ENCODE measurements at regions of chr16 and their contacts with region 1.

Region 1: DNA sequence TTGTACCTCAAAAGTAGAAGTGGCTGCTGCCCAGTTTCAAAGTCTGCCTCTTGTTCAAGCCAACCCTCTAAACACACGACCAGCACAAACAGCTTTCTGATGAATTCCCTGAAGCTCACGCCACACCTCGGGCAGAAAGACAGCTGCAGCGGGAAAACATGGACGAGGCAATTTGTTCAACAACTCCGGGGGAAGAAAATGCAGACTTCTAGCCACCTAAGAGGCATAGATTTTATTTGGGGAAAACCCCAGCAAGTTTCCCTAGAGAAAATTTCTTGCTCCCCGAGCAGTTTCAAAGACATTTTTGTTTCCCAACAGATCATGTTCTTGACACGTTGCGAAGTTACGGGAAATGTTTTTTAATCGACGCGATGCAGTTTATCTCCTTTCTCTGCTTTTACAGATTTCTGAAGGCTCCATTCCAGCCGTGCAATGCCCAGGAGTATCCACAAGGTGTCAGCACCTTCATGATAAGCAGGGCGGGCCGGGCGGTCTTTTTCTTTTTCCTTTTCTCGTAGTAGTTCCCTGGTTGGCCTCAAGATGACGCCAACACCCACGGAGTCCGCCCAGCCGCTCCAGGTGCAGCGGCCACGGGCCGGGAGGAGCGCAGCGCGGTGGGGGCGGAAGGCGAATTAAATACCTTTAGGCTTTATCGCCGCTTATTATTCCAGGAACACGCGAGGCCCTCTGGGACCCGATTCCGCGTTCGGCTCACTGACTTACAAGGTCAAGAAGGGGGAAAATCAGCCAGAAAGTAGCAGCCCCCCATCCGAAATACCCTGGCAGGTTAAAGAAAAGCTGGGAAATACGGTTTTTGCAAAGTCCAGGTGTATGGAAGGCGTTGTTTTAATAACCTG is 2.9 kb upstream of the FOXC2 start:
- DNase-seq: peak; percentile 95
- H3K4me3 ChIP-seq: no peak overlapping the region
- H3K27ac ChIP-seq: no peak overlapping the region
- H3K4me1 ChIP-seq: peaks cover 0 to 23% (median 19%) of the 10 kb centered on the region in 4 donors
- H3K27me3 ChIP-seq: peaks cover 42 to 97% (median 61%) of the 10 kb centered on the region in 3 donors
- CTCF ChIP-seq: peak; percentile 100
- EP300 ChIP-seq: no peak
- POLR2A ChIP-seq: no peak

Region 2: GRCh38 chr16:85986931-85987749 is 576.6 kb before region 1 on chr16:
- intact Hi-C with region 1: no loop called
- DNase-seq: peak; percentile 64
- H3K4me3 ChIP-seq: peak overlapping the region in 1 of 4 donors; percentile 1
- H3K27ac ChIP-seq: peak overlapping the region in 1 of 4 donors; percentile 12
- H3K4me1 ChIP-seq: peaks cover 0 to 6% (median 2%) of the 10 kb centered on the region in 4 donors
- H3K27me3 ChIP-seq: peaks cover 0 to 43% (median 7%) of the 10 kb centered on the region in 3 donors
- CTCF ChIP-seq: peak in 2 of 4 experiments; percentile 5 to 70
- EP300 ChIP-seq: no peak
- POLR2A ChIP-seq: no peak

Region 3: GRCh38 chr16:86242244-86243122 is 321.2 kb before region 1 on chr16:
- intact Hi-C with region 1: no loop called
- DNase-seq: peak; percentile 54
- H3K4me3 ChIP-seq: no peak overlapping the region
- H3K27ac ChIP-seq: no peak overlapping the region
- H3K4me1 ChIP-seq: peaks cover 0 to 19% (median 13%) of the 10 kb centered on the region in 4 donors
- H3K27me3 ChIP-seq: no peaks in the 10 kb centered on the region
- CTCF ChIP-seq: no peak
- EP300 ChIP-seq: no peak
- POLR2A ChIP-seq: no peak

Region 4: GRCh38 chr16:86819533-86819892 is 255.8 kb after region 1 on chr16:
- intact Hi-C with region 1: no loop called
- DNase-seq: no peak
- H3K4me3 ChIP-seq: no peak overlapping the region
- H3K27ac ChIP-seq: no peak overlapping the region
- H3K4me1 ChIP-seq: no peaks in the 10 kb centered on the region
- H3K27me3 ChIP-seq: peaks cover 0 to 73% (median 0%) of the 10 kb centered on the region in 3 donors
- CTCF ChIP-seq: no peak
- EP300 ChIP-seq: no peak
- POLR2A ChIP-seq: no peak

Region 5: GRCh38 chr16:87098976-87099720 is 535.4 kb after region 1 on chr16:
- intact Hi-C with region 1: no loop called
- DNase-seq: no peak
- H3K4me3 ChIP-seq: no peak overlapping the region
- H3K27ac ChIP-seq: no peak overlapping the region
- H3K4me1 ChIP-seq: no peaks in the 10 kb centered on the region
- H3K27me3 ChIP-seq: peaks cover 3 to 40% (median 5%) of the 10 kb centered on the region in 3 donors
- CTCF ChIP-seq: no peak
- EP300 ChIP-seq: no peak
- POLR2A ChIP-seq: no peak

Region 6: DNA sequence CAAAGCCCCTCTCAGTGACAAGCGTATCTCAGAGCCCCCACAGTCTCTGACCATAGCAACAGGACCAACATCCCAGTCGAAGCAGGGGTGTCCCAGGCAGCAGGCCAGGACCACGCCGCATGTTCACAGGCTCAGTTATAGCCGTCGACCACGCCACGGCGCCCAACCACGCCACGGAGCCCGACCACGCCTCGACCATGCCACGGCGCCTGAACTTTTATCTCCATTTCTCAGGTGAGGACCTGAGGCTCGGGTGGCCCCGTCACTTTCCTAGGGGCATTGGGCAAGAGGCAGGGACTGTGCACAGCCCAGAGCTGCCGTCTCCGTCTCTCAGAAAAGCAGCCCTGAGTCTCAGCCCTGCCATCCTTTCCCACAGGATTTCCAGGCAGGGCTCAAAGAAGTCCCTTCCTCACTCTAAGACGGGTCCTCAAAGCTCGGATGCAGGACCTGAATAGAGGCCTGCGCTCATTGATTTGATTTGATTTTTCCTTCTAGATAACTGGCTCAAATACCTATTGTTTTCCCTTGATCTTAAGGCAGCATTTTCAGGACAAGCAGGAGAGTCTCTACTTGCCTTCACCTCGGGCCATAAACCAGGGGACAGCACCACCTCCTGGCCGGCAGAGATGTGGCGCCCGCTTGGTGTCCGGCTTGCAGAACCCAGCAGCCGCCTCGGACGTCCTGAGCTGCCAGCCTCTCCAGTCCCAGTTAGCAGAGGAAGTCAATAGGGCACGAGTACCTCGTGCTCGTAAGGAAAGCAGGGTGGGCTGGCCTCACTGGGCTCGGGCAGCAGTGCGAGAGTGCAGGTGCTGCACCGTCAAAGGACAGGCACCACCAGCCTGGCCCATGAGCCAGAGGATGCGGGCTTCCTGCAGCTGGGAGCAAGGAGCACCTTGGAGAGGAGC is 714.7 kb after region 1 on chr16:
- intact Hi-C with region 1: loop called (anchors 2 kb)
- DNase-seq: peak; percentile 85
- H3K4me3 ChIP-seq: no peak overlapping the region
- H3K27ac ChIP-seq: no peak overlapping the region
- H3K4me1 ChIP-seq: peaks cover 0 to 2% (median 0%) of the 10 kb centered on the region in 4 donors
- H3K27me3 ChIP-seq: peaks cover 0 to 40% (median 5%) of the 10 kb centered on the region in 3 donors
- CTCF ChIP-seq: peak; percentile 56 to 79 (median 68)
- EP300 ChIP-seq: no peak
- POLR2A ChIP-seq: no peak